ENCODE measurements at regions of chr2 and their contacts with region 1.

Region 1: GRCh38 chr2:15939854-15940660 is at the start of gene MYCN:
- DNase-seq: no peak
- ATAC-seq: no peak
- H3K4me3 ChIP-seq: no peak within 1 kb of the TSS
- H3K27ac ChIP-seq: no peak within 1 kb of the TSS
- H3K4me1 ChIP-seq: no peaks in the 10 kb centered on the region
- H3K27me3 ChIP-seq: peaks cover 12 to 14% of the 10 kb centered on the region in 2 experiments
- CTCF ChIP-seq: peak in 1 of 3 experiments; percentile 45; a peak in 3 of 6 replicates
- EP300 ChIP-seq: no peak
- POLR2A ChIP-seq: no peak
- RAD21 ChIP-seq: peak; percentile 74
- polyA plus RNA-seq, gene MYCN: not detected

Region 2: DNA sequence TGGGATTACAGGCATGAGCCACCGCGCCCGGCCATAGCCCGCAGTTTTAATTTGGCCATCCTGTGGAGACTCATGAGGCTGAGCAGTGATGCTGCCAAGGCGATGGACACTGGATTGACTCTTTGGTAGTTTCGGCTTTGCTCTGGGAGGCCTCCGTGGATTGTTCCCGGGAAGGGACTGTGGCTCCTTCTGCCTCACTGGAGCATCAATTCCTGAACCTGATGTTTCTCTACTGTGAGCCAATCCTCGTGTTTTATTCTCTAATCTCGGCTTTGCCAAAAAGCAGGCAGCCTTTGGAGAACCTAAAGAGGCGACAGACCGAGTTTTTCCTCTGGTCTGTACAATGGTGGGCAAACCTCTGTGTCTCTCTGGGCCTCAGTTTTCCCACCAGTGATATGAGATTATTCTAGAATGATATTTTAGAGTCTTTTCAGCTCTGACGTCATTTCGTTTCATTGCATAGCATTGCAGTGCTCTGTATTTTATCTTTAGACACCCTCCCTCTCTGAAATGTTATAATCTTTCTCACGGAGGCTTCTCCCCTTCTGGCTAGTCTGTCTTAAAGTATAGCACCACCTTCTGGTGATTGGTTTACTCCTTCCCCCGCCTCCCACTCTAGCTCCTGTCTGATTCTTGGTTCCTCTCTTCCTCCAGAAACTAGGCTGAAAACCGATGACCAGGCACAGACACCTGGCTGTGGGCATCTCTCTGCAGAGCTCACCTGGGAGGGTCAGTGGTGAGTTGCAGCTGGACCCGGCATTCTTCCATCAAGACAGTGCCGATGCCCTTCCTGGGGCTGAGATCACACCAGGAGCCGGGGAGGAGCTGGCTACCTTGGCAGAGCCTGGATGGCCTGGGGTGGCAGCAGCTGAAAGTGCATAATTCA is 341.6 kb after region 1 on chr2:
- CTCF ChIA-PET with region 1: interaction called, 6 read pairs
- POLR2A ChIA-PET with region 1: no interaction called
- RAD21 ChIA-PET with region 1: interaction called, 5 read pairs
- SMC1A ChIA-PET with region 1: interaction called, 4 read pairs
- in situ Hi-C with region 1: no loop called
- intact Hi-C with region 1: loop called (anchors 1 kb)
- DNase-seq: no peak
- ATAC-seq: peak; percentile 83
- H3K4me3 ChIP-seq: no peak overlapping the region
- H3K27ac ChIP-seq: no peak overlapping the region
- H3K4me1 ChIP-seq: no peaks in the 10 kb centered on the region
- H3K27me3 ChIP-seq: no peaks in the 10 kb centered on the region; a peak in 2 of 4 replicates
- CTCF ChIP-seq: peak; percentile 33 to 45 (median 35); a peak in 5 of 6 replicates
- EP300 ChIP-seq: no peak
- POLR2A ChIP-seq: no peak
- RAD21 ChIP-seq: peak; percentile 47

Measured in GM12878 (cell line).